Activated CD4-positive, alpha-beta memory T cell treated with anti-CD3 and anti-CD28 coated beads for 36 hours (primary cell): ENCODE measurements at regions of chr7 and their contacts with region 1.

Region 1: GRCh38 chr7:45026984-45027773 is 27.2 kb downstream of the CCM2 start:
- DNase-seq: peak; percentile 30
- H3K4me3 Mint-ChIP-seq: peak overlapping the region; percentile 72
- H3K27ac Mint-ChIP-seq: peak overlapping the region; percentile 82
- H3K4me1 Mint-ChIP-seq: peaks cover 80% of the 10 kb centered on the region
- H3K27me3 Mint-ChIP-seq: no peaks in the 10 kb centered on the region

Region 2: DNA sequence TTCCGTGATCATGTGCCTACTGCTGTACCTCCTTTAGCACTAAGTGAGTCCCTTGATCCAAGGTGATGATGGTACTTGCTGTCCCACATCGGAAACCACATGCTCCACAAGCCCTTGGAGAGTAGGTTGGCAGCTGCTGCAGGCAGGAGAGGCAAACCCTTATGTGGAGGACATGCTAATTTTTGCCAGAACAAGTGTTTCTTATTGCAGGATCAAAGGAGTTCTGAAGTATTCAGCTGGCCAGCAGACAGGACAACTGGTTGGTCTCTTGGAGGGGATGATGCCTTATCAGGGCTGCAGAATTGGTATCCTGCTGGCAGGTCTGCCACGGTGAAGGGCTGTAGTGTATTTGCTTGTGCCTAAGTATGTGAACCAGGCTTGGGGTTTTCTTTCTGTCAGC is 24.8 kb after region 1 on chr7:
- CTCF ChIA-PET with region 1: no interaction called
- POLR2A ChIA-PET with region 1: no interaction called
- intact Hi-C with region 1: loop called (anchors 2 kb)
- DNase-seq: no peak
- H3K4me3 Mint-ChIP-seq: no peak overlapping the region
- H3K27ac Mint-ChIP-seq: no peak overlapping the region
- H3K4me1 Mint-ChIP-seq: peaks cover 43% of the 10 kb centered on the region
- H3K27me3 Mint-ChIP-seq: no peaks in the 10 kb centered on the region

Region 3: DNA sequence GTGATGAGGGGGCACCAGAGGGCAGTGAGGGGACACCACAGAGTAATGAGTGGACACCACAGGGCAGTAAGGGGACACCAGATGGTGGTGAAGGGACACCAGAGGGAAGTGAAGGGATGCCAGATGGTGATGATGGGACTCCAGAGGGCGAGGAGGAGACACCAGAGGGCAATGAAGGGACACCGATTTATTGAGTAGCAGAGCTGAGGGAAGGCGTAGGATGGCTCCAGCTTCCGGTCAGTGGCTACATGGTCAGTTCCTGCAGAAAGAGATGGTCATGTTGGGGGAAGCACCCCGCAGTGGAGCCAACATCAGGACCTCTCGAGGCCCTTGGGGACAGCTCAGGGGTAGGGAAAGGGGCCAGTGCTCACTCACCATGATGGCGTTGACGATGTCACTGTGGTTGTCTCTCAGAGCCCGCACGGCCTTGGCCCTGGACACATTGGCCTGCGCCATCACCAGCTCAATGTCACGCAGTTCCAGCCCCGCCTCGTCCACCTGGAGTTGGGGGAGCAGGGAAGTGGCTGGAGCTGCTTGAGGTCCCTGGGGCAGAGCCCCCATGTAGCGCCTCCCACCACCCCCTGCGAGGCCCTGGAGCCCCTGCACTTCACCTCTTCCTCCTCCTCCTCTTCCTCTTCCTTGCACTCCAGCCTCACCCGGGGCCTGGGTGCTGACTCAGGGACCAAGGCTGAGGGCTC is 53.2 kb after region 1 on chr7:
- CTCF ChIA-PET with region 1: no interaction called
- POLR2A ChIA-PET with region 1: no interaction called
- intact Hi-C with region 1: no loop called
- DNase-seq: no peak
- H3K4me3 Mint-ChIP-seq: no peak overlapping the region
- H3K27ac Mint-ChIP-seq: no peak overlapping the region
- H3K4me1 Mint-ChIP-seq: no peaks in the 10 kb centered on the region
- H3K27me3 Mint-ChIP-seq: no peaks in the 10 kb centered on the region